Astrocyte of the cerebellum (primary cell): ENCODE measurements at regions of chr1 and their contacts with region 1.

Region 1: GRCh38 chr1:205056188-205056611 is 13.2 kb downstream of the CNTN2 start:
- DNase-seq: no peak
- H3K4me3 ChIP-seq: no peak overlapping the region
- CTCF ChIP-seq: no peak

Region 2: DNA sequence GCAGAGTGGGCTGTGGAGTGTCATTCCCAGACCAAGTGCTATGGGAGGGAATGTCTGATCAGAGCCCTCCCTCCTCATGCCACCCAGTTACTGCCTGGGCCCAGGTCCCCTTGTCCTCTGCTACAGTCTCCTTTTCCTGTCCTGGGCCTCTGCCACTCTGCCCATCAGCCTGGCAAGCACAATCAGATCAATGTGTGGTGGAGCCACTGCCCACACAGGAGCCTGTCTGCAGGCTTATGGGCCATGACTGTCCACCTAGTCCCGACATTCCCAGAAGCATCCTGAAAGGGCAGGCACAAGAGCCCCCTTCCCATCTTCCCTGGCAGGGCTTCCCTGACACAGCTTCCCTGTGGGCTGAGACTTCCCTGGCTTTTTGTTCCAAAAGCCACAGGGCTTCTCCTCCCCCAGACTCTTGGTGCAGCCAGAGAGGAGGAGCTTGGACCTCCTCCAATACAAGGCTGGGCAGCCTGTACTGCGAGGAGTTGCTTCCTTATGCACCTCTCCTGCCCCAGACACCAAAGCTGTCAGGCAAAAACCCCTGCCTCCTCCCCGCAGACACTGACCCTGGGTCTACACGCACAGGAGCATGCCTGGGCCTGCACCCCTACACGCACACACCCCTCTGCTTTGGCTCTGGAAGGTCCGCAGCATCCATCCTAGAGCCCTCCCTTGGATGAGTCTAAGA is 42.4 kb before region 1 on chr1:
- in situ Hi-C with region 1: loop called (anchors 5 kb)
- DNase-seq: no peak
- H3K4me3 ChIP-seq: no peak overlapping the region
- CTCF ChIP-seq: no peak

Region 3: DNA sequence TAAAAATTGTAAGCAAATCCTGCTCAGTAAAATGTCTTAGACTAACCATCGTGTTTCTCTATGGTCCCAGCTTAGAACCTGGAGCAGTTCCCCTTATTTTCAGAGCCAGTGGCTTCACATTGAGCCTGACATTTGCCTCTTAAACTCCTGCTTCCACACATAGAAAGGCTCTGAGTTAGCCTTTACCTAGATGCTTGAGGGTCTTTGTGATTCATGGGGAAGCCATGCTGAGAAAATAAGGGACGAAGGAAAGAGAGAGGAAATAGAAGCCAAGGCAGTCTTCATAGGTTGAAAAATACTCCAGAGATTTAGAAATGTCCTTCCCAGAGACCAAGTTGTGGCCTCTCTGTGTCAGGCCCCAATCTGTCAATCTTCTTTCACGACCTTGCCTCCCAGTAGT is 81.7 kb after region 1 on chr1:
- in situ Hi-C with region 1: no loop called
- DNase-seq: no peak
- H3K4me3 ChIP-seq: no peak overlapping the region
- CTCF ChIP-seq: no peak

Region 4: GRCh38 chr1:205171369-205171768 is 115.2 kb after region 1 on chr1:
- in situ Hi-C with region 1: no loop called
- DNase-seq: no peak
- H3K4me3 ChIP-seq: no peak overlapping the region
- CTCF ChIP-seq: no peak